ENCODE measurements at regions of chr10 and their contacts with region 1.

Region 1: DNA sequence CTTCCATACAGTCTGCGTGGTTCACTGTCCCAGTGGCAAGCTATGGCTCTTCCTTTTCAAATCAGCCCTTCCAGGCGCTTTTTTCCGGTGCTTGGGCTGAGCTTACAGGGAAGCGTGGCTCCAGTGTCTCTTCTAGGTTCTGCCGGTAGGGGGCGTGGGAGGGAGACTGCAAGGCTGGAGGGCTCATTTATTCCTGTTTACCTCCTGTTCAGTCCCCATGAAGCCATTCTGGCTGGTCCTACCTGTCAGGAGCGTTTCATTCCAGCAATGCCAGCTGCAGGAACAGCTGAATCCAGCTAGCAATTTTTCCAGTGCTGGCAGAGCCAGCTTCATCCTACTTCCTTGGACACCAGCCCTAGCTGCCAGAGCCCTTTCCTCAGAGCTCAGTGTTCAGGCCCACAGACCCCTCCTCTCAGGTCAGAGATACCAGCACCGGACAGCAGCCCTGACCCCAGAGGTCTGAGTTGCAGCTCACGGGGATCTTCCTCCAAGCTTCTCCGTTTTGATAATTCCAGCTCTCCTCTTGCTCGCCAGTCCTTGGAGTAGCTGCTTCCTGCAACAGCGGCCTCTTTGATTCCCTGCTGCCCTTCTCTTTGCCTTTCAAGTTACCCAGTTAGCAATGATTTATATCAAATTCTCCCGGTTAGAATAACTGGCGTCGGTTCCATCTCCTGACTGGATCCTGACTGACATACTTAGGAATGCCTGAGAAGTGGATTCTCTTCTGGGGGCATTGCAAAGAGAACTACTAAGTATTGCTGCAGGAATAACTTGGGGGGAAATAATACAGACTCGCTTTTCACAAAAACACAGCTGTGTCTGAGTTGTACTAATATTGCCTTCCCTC is 129.8 kb downstream of the FRMD4A start:
- DNase-seq: no peak
- ATAC-seq: no peak
- H3K4me3 ChIP-seq: no peak overlapping the region
- H3K27ac ChIP-seq: no peak overlapping the region
- H3K4me1 ChIP-seq: no peaks in the 10 kb centered on the region
- H3K27me3 ChIP-seq: no peaks in the 10 kb centered on the region
- CTCF ChIP-seq: peak; percentile 30; the same call in 1 of the 2 replicates

Region 2: DNA sequence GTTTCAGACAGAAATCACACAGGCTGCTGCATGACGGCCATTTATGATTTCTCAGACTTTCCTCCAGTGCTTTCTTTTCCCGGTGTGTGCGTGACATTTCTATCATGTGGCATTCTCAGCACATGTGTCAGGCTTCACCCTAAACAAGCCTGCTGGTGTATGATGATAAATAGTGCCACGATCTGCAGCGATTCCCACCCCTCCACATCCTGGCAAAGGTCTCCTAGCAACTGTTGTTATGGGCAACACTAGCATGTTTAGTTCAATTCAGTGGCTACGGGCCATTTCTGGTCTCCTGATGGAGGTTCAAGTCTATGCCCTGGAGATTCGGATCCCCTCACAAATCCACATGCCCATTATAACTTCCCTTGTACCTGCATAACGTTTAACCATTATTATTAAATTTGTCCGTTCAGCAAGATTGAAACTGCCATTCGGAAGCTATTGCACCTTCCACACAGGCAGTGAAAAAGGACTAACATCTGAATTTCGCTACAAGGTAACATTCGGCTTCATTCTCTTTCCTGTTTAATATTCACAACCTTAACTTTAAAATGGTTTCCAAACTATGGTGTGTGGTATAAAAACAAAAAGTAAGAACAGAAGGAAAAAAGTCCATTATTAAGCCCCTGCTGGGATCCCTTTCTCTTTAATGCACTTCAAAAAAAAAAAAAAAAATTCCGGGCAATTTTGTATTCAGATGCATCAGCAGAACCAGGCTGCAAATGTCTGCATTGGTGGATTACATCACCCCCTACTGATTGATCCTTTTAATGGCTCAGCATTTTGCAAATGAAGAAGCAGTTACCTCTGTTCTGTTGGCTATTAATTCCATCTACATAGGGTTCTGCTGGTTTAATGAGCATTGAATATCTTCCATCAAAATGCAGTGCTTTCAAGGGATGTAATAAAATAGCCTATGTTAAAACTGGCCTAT is 39.6 kb after region 1 on chr10:
- CTCF ChIA-PET with region 1: no interaction called
- POLR2A ChIA-PET with region 1: no interaction called
- intact Hi-C with region 1: no loop called
- DNase-seq: no peak
- ATAC-seq: no peak
- H3K4me3 ChIP-seq: no peak overlapping the region
- H3K27ac ChIP-seq: no peak overlapping the region
- H3K4me1 ChIP-seq: peaks cover 8% of the 10 kb centered on the region; the same call in 1 of the 2 replicates
- H3K27me3 ChIP-seq: no peaks in the 10 kb centered on the region
- CTCF ChIP-seq: no peak; the same call in 1 of the 2 replicates

Region 3: GRCh38 chr10:14478604-14479003 is 277.7 kb after region 1 on chr10:
- CTCF ChIA-PET with region 1: interaction called, 13 read pairs
- POLR2A ChIA-PET with region 1: no interaction called
- intact Hi-C with region 1: no loop called
- DNase-seq: peak; percentile 27
- ATAC-seq: no peak
- H3K4me3 ChIP-seq: no peak overlapping the region
- H3K27ac ChIP-seq: no peak overlapping the region
- H3K4me1 ChIP-seq: no peaks in the 10 kb centered on the region
- H3K27me3 ChIP-seq: no peaks in the 10 kb centered on the region
- CTCF ChIP-seq: peak; percentile 49